G401 (cell line): ENCODE measurements at regions of chr1 and their contacts with region 1.

Region 1: DNA sequence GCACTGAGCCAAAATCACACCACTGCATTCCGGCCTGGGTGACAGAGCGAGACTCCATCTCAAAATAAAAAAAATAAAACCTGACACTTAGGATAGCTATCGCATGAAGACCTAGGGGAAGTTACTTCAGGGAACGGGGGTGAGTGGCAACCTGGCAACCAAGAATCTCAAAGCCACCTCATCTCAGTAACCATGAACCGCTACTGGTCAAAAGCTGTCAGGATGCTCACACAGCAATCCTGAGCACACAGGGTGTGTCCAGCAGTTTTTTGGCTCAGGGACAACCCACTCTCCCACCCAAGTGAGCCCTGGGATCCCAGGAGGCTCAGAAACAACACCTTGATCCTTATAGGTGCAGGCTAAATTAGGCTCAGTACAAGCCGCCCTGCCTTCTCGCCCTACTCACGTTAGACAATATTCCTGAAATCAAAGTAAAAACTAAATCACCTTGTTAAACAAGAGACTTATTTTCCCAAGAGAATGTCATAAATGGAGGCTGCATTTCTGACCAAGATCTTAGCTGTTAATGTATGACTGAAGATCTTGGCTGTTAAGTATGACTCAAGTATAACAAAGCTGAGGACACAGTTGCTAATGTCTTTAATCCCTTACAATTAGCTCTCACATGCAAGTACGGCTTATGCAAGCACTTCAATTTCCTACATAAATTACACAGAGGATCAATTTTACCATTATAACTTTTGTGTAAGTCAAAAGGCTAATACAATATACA is 48.3 kb upstream of the NADK start:
- DNase-seq: no peak

Region 2: DNA sequence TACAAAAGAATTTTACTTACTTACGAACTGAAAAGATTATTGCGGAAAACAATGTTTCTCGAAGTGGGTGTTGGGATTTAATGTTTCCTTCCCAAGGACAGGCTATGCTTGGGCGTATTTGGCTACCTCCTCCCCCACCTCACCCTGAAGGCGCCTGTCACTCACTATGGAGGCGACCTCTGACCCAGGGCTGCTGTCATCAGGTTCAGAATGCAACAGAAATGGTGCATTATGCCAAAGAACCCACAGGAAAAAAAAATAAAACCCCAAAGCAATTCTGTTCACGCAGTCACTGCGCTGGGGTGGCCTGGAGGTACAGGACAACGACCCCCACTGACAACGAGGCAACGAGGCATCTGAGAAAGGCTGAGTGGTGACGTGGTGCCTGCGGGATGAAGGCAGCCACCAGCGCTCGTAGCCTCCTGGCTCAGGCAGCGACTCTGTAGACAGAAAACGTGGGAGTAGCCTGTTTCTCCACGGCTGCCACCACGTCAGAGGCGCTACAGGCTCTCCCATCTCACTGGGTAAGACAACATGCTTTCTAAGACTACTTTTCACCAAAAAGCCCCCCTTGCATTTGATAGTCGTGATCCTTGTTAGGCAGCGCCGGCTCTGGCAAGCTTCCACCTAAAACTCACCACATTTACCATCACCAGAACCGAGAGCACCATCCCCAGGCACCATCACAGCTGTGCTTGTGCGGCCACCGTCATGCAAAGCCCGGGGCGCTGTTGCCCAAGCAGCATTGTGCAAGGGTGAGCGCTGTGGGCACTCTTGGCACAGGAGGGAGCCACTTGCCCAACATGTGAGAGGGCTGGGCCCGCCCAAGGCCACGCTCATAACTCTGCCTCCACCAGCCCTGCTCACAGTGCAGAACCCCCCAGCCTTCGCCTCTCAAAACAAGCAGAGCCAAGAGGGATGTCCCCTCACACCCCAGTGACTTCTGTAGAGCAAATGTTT is 62.6 kb before region 1 on chr1:
- in situ Hi-C with region 1: loop called (anchors 10 kb)
- DNase-seq: no peak

Region 3: DNA sequence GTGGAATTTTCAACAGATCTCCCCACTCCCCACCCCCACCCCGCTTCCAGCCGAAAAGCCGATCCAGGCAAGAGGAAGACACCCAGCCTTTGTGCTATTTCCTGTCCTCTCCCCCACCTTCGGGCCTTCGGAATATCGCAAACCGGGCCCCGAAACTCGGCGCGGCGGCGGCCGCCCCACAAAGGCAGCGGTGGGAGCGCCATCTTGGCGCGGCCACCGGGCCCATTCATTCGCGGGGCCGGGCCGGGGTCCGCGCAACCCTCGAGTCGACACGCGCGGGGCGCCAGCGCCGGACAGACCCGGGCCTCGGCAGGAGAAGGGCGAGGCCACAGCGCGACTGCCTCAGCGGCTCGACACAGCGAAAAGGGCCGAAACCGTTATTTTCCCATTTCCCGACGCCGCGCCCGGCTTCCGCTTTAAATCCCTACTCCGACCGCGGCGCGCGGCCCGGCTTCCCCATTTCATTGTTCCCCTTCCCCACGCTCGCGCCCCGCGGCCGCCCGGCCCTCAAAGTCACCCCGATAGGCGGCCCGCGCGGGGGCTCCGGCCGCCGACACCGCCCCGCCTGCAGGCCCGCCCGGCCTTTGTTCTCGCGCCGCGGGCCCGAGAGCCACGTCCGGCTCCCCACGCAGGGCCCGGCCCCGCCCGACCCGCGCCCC is 63.5 kb after region 1 on chr1:
- in situ Hi-C with region 1: loop called (anchors 10 kb)
- DNase-seq: no peak

Region 4: GRCh38 chr1:1954831-1955441 is 128.4 kb after region 1 on chr1:
- in situ Hi-C with region 1: no loop called
- DNase-seq: no peak